Vagina (tissue), 2 donors: ENCODE measurements at regions of chr1 and their contacts with region 1.

Region 1: GRCh38 chr1:147273409-147274336 is 31.2 kb downstream of the CHD1L start:
- DNase-seq: no peak
- H3K4me3 ChIP-seq: no peak overlapping the region
- H3K27ac ChIP-seq: peak overlapping the region; percentile 41
- H3K4me1 ChIP-seq: peaks cover 14% of the 10 kb centered on the region
- H3K27me3 ChIP-seq: no peaks in the 10 kb centered on the region
- CTCF ChIP-seq: peak in 2 of 3 experiments; percentile 41 to 55
- POLR2A ChIP-seq: no peak

Region 2: GRCh38 chr1:147214842-147215539 is 58.7 kb before region 1 on chr1:
- intact Hi-C with region 1: no loop called
- DNase-seq: no peak
- H3K4me3 ChIP-seq: no peak overlapping the region
- H3K27ac ChIP-seq: no peak overlapping the region
- H3K4me1 ChIP-seq: peaks cover 6% of the 10 kb centered on the region
- H3K27me3 ChIP-seq: no peaks in the 10 kb centered on the region
- CTCF ChIP-seq: no peak
- POLR2A ChIP-seq: no peak

Region 3: DNA sequence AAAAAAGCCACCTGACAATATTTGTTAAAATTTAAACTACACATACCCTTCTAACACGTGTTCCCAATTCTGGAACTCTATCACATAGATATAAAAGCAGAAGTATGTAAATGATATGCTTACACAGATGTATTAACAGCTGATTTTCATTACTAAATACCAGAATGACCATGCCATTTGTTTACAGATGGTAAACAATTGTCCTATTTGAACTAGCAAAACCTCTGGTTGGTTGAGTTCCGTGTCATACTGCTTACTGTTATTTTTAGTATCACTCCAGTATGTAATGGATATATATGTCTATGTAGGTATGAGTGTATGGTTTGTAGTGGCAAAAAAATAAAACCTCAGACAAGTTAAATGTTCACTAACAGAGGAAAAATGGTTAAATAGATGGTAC is 39.6 kb after region 1 on chr1:
- intact Hi-C with region 1: no loop called
- DNase-seq: no peak
- H3K4me3 ChIP-seq: no peak overlapping the region
- H3K27ac ChIP-seq: no peak overlapping the region
- H3K4me1 ChIP-seq: no peaks in the 10 kb centered on the region
- H3K27me3 ChIP-seq: no peaks in the 10 kb centered on the region
- CTCF ChIP-seq: no peak
- POLR2A ChIP-seq: no peak

Region 4: DNA sequence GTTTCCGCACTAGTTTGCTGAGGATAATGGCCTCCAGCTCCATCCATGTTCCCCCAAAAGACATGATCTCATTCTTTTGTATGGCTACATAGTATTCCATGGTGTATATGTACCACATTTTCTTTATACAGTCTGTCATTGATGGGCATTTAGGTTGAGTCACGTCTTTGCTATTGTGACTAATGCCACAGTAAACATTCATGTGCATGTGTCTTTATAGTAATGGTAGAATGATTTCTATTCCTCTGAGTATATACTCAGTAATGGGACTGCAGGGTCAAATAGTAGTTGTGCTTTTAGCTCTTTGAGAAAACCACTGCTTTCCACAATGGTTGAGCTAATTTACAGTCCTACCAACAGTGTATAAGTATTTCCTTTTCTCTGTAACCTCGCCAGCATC is 189.3 kb after region 1 on chr1:
- intact Hi-C with region 1: no loop called
- DNase-seq: no peak
- H3K4me3 ChIP-seq: no peak overlapping the region
- H3K27ac ChIP-seq: no peak overlapping the region
- H3K4me1 ChIP-seq: no peaks in the 10 kb centered on the region
- H3K27me3 ChIP-seq: no peaks in the 10 kb centered on the region
- CTCF ChIP-seq: no peak
- POLR2A ChIP-seq: no peak

Region 5: GRCh38 chr1:147635342-147635741 is 361.7 kb after region 1 on chr1:
- intact Hi-C with region 1: loop called (anchors 5 kb)
- DNase-seq: no peak
- H3K4me3 ChIP-seq: no peak overlapping the region
- H3K27ac ChIP-seq: no peak overlapping the region
- H3K4me1 ChIP-seq: no peaks in the 10 kb centered on the region
- H3K27me3 ChIP-seq: no peaks in the 10 kb centered on the region
- CTCF ChIP-seq: no peak
- POLR2A ChIP-seq: no peak